Endothelial cell of umbilical vein (primary cell): ENCODE measurements at regions of chr22 and their contacts with region 1.

Region 1: GRCh38 chr22:49224243-49224642 is 603.4 kb downstream of the BRD1 start:
- DNase-seq: no peak
- H3K4me3 ChIP-seq: no peak overlapping the region
- H3K27ac ChIP-seq: no peak overlapping the region
- H3K4me1 ChIP-seq: no peaks in the 10 kb centered on the region
- H3K27me3 ChIP-seq: no peaks in the 10 kb centered on the region
- CTCF ChIP-seq: no peak
- POLR2A ChIP-seq: no peak

Region 2: GRCh38 chr22:48743601-48744282 is 480.5 kb before region 1 on chr22:
- CTCF ChIA-PET with region 1: no interaction called
- POLR2A ChIA-PET with region 1: no interaction called
- dilution Hi-C with region 1: no loop called
- intact Hi-C with region 1: loop called (anchors 5 kb)
- DNase-seq: no peak
- H3K4me3 ChIP-seq: no peak overlapping the region
- H3K27ac ChIP-seq: no peak overlapping the region
- H3K4me1 ChIP-seq: no peaks in the 10 kb centered on the region
- H3K27me3 ChIP-seq: no peaks in the 10 kb centered on the region
- CTCF ChIP-seq: no peak
- POLR2A ChIP-seq: no peak

Region 3: GRCh38 chr22:49235463-49236300 is 11.4 kb after region 1 on chr22:
- CTCF ChIA-PET with region 1: no interaction called
- POLR2A ChIA-PET with region 1: no interaction called
- dilution Hi-C with region 1: no loop called
- intact Hi-C with region 1: no loop called
- DNase-seq: no peak
- H3K4me3 ChIP-seq: no peak overlapping the region
- H3K27ac ChIP-seq: no peak overlapping the region
- H3K4me1 ChIP-seq: no peaks in the 10 kb centered on the region
- H3K27me3 ChIP-seq: no peaks in the 10 kb centered on the region
- CTCF ChIP-seq: no peak
- POLR2A ChIP-seq: no peak

Region 4: DNA sequence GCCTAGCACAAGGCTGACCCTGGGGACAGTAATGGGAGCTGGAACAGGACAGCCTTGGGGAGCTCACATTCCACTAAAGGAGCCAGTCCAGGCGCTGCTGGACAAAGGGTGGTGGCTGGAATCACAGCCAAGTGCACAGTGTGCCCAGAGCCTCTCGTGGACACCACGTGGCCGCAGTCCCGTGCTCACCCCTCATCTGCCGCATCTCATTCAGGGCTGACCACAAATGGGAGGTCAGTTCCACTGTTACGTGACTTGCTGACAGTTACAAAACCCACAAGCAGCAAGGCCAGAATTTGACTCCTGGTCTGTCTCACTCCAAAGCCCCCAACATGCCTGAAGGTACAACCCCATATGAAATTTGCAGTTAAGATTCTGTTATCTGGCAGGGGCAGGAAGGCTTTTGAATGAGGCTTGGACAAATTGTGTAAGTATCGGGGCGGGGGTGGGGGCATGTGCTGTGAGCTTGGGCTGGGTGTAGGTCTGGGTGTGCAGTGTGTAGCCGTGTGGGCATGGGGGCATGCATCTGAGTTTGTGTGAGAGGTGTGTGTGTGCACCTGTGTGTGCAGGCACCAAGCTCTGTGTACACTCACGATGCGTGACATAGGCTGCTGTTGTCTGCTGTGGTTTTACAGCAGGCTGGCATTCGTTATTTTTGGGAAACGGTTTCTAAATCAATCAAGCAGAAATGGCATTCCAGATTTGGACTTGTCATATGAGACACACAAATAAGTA is 301.7 kb after region 1 on chr22:
- CTCF ChIA-PET with region 1: no interaction called
- POLR2A ChIA-PET with region 1: no interaction called
- dilution Hi-C with region 1: no loop called
- intact Hi-C with region 1: no loop called
- DNase-seq: no peak
- H3K4me3 ChIP-seq: no peak overlapping the region
- H3K27ac ChIP-seq: no peak overlapping the region
- H3K4me1 ChIP-seq: no peaks in the 10 kb centered on the region
- H3K27me3 ChIP-seq: no peaks in the 10 kb centered on the region
- CTCF ChIP-seq: no peak
- POLR2A ChIP-seq: no peak